ENCODE measurements at regions of chr1 and their contacts with region 1.

Region 1: DNA sequence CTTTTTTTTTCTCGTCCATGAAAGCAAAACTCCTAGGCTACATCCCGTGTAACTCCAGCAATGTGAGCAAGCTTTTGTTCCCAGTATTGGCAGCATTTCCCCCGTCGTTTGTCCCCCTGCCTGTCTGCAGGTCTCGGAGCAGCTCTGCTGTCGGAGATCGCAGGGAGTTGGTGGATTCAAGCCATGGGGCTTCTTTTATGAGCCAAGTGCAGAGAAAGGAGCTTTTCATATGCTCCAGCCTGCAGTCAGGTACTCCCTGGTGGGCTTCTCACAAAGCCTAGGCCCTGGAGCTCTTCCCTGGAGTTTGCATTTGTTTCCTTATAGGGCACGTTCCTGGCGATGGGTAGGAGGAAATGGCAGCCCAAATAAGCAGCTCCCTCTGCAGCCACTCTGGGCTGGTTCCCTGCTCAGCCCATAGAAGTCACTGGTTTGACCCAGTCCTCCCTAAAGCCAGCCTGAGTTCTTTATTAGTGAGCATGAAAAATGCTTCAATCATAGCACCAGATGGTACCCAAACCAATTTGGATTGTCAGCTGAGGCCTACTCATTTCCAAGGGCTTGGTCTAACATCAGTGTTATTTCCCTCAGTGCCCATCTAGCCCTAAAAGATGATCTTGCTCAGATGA is 78.3 kb downstream of the NUF2 start:
- DNase-seq: no peak
- H3K4me3 ChIP-seq: no peak overlapping the region
- H3K27ac ChIP-seq: no peak overlapping the region
- H3K4me1 ChIP-seq: no peaks in the 10 kb centered on the region; a peak in 1 of 4 replicates
- H3K27me3 ChIP-seq: no peaks in the 10 kb centered on the region; the same call in 1 of the 2 replicates
- CTCF ChIP-seq: no peak
- EP300 ChIP-seq: no peak
- RAD21 ChIP-seq: no peak

Region 2: GRCh38 chr1:163381487-163382184 is 18.5 kb before region 1 on chr1:
- CTCF ChIA-PET with region 1: no interaction called
- POLR2A ChIA-PET with region 1: no interaction called
- DNase-seq: no peak
- H3K4me3 ChIP-seq: no peak overlapping the region
- H3K27ac ChIP-seq: no peak overlapping the region
- H3K4me1 ChIP-seq: no peaks in the 10 kb centered on the region
- H3K27me3 ChIP-seq: no peaks in the 10 kb centered on the region; the same call in none of the 2 replicates
- CTCF ChIP-seq: no peak
- EP300 ChIP-seq: no peak
- RAD21 ChIP-seq: no peak

Region 3: DNA sequence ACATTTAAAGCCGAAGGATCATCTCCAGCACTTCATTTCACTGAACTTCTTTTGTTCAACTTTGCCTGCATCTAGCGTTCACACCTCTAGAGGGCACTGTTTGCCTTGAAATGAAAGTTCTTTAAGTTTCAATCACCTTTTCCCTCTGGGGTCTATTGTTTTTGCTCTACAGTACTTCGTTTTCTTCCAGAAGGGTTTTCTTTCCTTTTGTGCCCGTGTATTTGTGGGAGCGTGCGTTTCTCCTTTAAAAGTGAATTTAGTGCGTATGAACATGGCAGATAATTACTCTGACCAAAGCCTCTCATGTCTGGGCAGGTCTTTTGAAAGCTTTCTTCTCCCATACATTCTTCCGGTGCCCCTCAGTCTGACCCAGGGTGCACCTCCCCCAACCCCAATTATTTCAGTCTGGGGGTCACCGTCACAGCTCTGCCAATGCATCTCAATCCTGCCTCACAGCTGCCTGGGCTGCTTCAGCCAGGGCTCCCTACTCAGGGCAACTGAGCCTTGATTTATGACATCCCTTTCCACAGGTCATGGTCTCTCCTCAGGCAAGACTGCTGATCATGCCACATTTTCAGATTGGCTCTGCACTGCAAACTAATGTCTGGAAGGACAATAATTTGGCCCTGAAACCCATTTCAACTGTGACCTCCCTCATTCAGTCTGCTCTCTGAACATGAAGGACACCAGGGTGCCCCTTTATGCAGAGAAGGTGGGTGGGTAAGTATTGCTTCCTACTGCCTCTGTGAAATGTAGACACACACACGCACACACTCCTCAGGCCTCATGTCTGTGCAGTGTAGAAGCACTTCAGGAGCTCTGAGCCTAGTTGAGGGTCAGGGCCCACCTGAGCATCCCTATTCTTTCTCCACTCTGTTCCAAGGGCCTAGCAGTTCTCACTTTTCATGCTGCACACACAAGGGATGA is 10.2 kb after region 1 on chr1:
- CTCF ChIA-PET with region 1: interaction called, 11 read pairs
- POLR2A ChIA-PET with region 1: no interaction called
- DNase-seq: peak; percentile 60
- H3K4me3 ChIP-seq: no peak overlapping the region; a peak in 1 of 4 replicates
- H3K27ac ChIP-seq: no peak overlapping the region
- H3K4me1 ChIP-seq: peaks cover 0 to 13% of the 10 kb centered on the region in 2 experiments; a peak in 1 of 4 replicates
- H3K27me3 ChIP-seq: no peaks in the 10 kb centered on the region
- CTCF ChIP-seq: peak; percentile 89
- EP300 ChIP-seq: no peak
- RAD21 ChIP-seq: peak; percentile 92

Region 4: GRCh38 chr1:163421701-163422100 is 21.6 kb after region 1 on chr1:
- CTCF ChIA-PET with region 1: no interaction called
- POLR2A ChIA-PET with region 1: no interaction called
- DNase-seq: no peak
- H3K4me3 ChIP-seq: no peak overlapping the region
- H3K27ac ChIP-seq: no peak overlapping the region
- H3K4me1 ChIP-seq: no peaks in the 10 kb centered on the region
- H3K27me3 ChIP-seq: no peaks in the 10 kb centered on the region; the same call in 1 of the 2 replicates
- CTCF ChIP-seq: no peak
- EP300 ChIP-seq: no peak
- RAD21 ChIP-seq: no peak